ENCODE measurements at regions of chr1 and their contacts with region 1.

Region 1: GRCh38 chr1:92822879-92823278 is 9.0 kb upstream of the RPL5 start:
- DNase-seq: no peak
- H3K4me3 ChIP-seq: no peak overlapping the region
- H3K27ac ChIP-seq: no peak overlapping the region
- H3K4me1 ChIP-seq: peaks cover 0 to 5% (median 0%) of the 10 kb centered on the region in 6 donors
- H3K27me3 ChIP-seq: no peaks in the 10 kb centered on the region
- CTCF ChIP-seq: no peak
- POLR2A ChIP-seq: no peak

Region 2: GRCh38 chr1:92754000-92754718 is 68.7 kb before region 1 on chr1:
- intact Hi-C with region 1: loop called (anchors 5 kb)
- DNase-seq: no peak
- H3K4me3 ChIP-seq: no peak overlapping the region
- H3K27ac ChIP-seq: no peak overlapping the region
- H3K4me1 ChIP-seq: peaks cover 0 to 4% (median 0%) of the 10 kb centered on the region in 6 donors
- H3K27me3 ChIP-seq: no peaks in the 10 kb centered on the region
- CTCF ChIP-seq: no peak
- POLR2A ChIP-seq: no peak